ENCODE measurements at regions of chr5 and their contacts with region 1.

Region 1: DNA sequence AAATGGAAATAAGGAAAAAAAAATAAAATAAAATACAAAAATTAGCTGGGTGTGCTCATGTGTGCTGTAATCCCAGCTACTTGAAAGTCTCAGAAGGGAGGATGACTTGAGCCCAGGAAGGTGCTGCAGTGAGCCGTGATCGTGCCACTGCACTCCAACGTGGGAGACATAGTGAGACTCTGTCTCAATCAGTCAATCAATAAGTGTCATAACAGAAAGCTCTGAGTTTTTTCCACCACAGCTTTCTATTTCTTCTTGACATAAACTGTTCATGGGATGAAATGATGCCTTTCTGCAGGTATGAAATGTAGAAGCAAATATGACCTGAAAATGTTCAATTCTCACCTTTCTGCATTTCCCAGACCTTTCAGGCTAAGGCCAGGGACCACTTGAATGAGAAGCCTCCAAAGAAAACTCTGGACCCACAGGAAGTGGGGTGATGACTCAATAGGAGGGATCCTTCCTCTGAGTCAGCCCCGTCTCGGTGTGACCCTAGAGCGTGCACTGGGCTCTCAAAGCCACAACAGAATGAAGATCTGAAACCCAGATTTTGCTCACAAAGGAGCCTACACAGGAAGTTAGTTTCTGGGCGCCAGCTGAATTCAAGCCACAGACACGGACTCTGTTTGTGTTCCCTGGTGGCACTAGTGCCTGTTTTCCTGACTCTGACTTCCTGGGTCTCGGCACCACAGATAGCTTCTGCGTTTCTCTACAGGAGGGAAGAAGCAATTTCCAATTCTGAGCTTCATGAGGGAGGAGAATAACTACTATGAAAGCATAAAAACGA is 62.0 kb downstream of the ANKH start:
- DNase-seq: peak; percentile 47
- ATAC-seq: peak; percentile 95
- H3K4me3 Mint-ChIP-seq: peak overlapping the region; percentile 79
- H3K27ac Mint-ChIP-seq: peak overlapping the region; percentile 92
- H3K4me1 Mint-ChIP-seq: peaks cover 48% of the 10 kb centered on the region
- H3K27me3 Mint-ChIP-seq: no peaks in the 10 kb centered on the region
- CTCF ChIP-seq: no peak

Region 2: GRCh38 chr5:14595189-14595588 is 214.4 kb before region 1 on chr5:
- CTCF ChIA-PET with region 1: no interaction called
- POLR2A ChIA-PET with region 1: no interaction called
- intact Hi-C with region 1: no loop called
- DNase-seq: no peak
- ATAC-seq: peak; percentile 70
- H3K4me3 Mint-ChIP-seq: peak overlapping the region; percentile 37
- H3K27ac Mint-ChIP-seq: peak overlapping the region; percentile 43
- H3K4me1 Mint-ChIP-seq: peaks cover 41% of the 10 kb centered on the region
- H3K27me3 Mint-ChIP-seq: no peaks in the 10 kb centered on the region
- CTCF ChIP-seq: no peak

Region 3: DNA sequence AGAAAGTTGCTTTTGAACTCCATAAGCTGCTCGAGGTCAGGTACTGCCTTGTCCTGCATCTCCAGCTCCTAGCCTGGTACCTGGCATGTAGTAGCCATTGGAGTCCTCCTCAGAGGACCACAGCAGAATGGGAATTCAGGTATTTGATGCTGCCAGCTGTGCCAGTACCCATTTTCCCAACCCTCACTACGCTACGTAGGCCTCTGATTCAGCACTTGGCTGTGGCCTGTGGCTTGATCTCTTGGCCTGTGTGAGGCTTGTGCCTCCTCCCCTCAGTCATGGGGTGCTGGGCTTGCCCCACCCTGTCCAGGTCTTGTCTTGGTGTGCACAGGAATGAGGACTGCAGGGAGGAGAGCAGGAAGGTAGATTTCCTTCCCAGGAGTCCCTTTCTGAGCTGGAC is 133.2 kb before region 1 on chr5:
- CTCF ChIA-PET with region 1: no interaction called
- POLR2A ChIA-PET with region 1: no interaction called
- intact Hi-C with region 1: loop called (anchors 2 kb)
- DNase-seq: no peak
- ATAC-seq: peak; percentile 53
- H3K4me3 Mint-ChIP-seq: peak overlapping the region; percentile 76
- H3K27ac Mint-ChIP-seq: peak overlapping the region; percentile 86
- H3K4me1 Mint-ChIP-seq: peaks cover 86% of the 10 kb centered on the region
- H3K27me3 Mint-ChIP-seq: no peaks in the 10 kb centered on the region
- CTCF ChIP-seq: no peak

Region 4: GRCh38 chr5:14849516-14850294 is 40.1 kb after region 1 on chr5:
- CTCF ChIA-PET with region 1: no interaction called
- POLR2A ChIA-PET with region 1: interaction called, 4 read pairs
- intact Hi-C with region 1: loop called (anchors 5 kb)
- DNase-seq: no peak
- ATAC-seq: no peak
- H3K4me3 Mint-ChIP-seq: no peak overlapping the region
- H3K27ac Mint-ChIP-seq: no peak overlapping the region
- H3K4me1 Mint-ChIP-seq: peaks cover 20% of the 10 kb centered on the region
- H3K27me3 Mint-ChIP-seq: no peaks in the 10 kb centered on the region
- CTCF ChIP-seq: no peak

Region 5: DNA sequence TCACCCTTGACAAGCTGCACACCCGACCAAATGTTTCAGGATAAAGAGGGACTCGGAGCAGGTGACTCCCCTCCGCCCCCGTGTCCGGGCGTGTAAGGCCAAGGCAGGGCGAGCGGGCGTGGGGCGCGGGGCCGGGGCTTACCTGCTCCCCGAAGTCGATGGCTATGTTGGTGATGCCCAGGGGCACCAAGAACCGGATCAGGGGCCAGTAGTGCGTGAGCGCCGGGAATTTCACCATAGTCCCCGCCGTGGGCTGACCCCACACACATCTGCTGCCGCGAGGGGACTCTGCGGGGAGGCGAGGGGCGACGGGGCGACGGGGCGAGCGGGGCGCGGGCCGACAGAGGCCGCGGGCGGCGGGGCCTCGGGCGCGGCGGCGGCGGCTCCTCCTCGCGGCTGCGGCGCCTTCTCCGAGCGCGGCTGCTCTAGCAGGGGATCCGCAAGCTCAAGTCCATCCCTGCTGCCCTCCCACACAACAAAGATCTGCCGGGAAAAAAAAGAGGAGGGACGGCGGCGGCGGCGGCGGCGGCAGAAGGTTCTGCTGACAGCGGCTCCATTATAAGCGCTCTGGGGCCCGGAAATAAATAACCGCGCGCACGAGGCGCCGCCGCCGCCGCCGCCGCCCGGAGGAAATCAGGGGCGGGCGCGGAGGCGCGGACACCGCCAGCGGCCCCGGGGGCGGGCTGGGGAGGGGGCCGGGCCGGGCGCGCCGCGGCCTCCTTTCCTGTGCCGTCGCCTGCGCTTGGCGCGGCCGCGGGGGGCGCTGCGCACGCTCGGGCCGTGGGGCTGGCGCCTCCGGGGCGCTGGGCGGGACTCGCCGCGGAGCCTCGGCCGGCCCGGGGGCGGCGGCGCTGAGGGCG is 61.9 kb after region 1 on chr5 and contains the start of gene ANKH:
- CTCF ChIA-PET with region 1: interaction called, 4 read pairs
- POLR2A ChIA-PET with region 1: interaction called, 21 read pairs
- intact Hi-C with region 1: loop called (anchors 1 kb)
- DNase-seq: peak; percentile 86
- ATAC-seq: peak; percentile 88
- H3K4me3 Mint-ChIP-seq: peak within 1 kb of the TSS; percentile 87
- H3K27ac Mint-ChIP-seq: peak within 1 kb of the TSS; percentile 80
- H3K4me1 Mint-ChIP-seq: peaks cover 22% of the 10 kb centered on the region
- H3K27me3 Mint-ChIP-seq: no peaks in the 10 kb centered on the region
- CTCF ChIP-seq: no peak
- total RNA-seq, gene ANKH: 43.3 and 43.7 TPM in 2 replicates

Region 6: DNA sequence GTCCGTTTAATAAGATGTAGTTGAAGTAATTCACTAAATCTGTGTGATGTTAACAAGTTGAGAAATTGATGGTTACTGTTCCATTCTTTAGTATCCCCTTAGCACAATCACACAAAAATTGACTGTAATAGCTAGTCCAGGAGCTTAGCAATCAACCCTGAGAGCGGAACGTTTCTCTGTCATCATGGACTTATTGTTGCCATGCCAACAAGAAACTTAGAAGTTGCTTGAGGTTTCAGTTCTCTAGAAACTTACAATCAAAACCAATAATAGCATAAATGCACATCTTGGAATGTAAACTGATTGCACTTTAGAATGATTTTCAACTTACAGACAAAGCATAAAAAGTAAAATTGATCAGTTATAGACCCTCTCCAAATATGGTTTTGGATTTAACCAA is 187.4 kb after region 1 on chr5:
- CTCF ChIA-PET with region 1: no interaction called
- POLR2A ChIA-PET with region 1: interaction called, 7 read pairs
- intact Hi-C with region 1: loop called (anchors 1 kb)
- DNase-seq: no peak
- ATAC-seq: peak; percentile 76
- H3K4me3 Mint-ChIP-seq: peak overlapping the region; percentile 15
- H3K27ac Mint-ChIP-seq: peak overlapping the region; percentile 75
- H3K4me1 Mint-ChIP-seq: peaks cover 59% of the 10 kb centered on the region
- H3K27me3 Mint-ChIP-seq: no peaks in the 10 kb centered on the region
- CTCF ChIP-seq: no peak

Measured in activated B cell treated with CpG ODN at 0.5 μM for 24 hours (primary cell).